ENCODE measurements at regions of chr6 and their contacts with region 1.

Region 1: DNA sequence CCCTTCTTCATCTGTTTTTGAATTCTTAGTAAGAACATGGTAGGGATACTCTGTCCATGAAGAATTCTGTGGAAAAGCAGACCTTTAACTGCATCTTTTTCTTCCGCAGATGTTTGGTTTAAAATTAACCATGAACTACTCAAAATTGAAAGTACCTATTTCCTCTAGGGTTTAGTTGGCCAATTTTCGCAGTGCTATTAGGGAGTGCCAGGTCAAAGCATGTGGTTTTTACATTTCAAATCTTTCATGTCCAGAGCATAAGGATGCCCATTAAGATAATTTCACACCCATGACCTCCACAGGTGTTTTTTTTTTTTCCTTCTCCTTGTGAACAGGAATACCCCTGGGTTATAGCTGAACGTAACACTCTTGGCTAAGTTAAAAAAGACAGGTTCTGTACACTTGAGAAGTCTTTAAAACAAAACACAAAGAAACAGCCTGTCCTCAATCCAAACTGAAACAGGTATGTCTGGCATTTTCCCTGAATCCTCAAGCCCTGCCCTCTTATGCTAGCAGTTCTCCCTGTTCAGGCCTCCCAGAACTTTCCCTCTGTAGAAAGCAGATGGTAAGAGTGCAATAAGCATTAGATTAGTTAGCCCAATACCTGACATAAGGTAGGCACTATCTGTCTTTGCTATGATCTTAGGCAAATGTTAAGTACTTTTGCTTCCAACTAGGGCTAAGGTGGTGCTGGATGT is 67.1 kb downstream of the ELOVL5 start:
- DNase-seq: no peak
- ATAC-seq: no peak
- H3K4me3 ChIP-seq: no peak overlapping the region
- H3K4me3 Mint-ChIP-seq: no peak overlapping the region
- H3K27ac ChIP-seq: no peak overlapping the region
- H3K27ac Mint-ChIP-seq: no peak overlapping the region
- H3K4me1 ChIP-seq: peaks cover 0 to 21% of the 10 kb centered on the region in 2 donors
- H3K4me1 Mint-ChIP-seq: peaks cover 13 to 42% (median 19%) of the 10 kb centered on the region in 7 donors
- H3K27me3 ChIP-seq: no peaks in the 10 kb centered on the region
- H3K27me3 Mint-ChIP-seq: no peaks in the 10 kb centered on the region

Region 2: DNA sequence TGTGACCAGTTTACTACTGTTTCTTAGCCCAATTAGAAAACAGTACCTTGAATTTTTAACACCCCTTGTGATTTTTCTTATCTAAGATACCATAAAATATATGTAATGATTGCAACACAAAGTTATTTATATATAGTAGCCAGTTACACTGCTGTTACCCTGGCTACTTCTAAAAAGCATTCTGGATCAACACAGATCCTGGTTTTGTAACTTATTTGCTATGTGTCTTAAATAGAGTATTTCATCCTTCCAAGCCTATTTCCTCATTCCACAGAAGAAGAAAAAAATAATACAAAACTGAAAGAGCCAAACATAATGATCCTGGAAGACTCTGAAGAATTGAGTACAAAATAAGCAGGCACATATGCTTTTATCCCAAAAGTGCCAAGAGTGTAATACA is 267.6 kb before region 1 on chr6:
- CTCF ChIA-PET with region 1: no interaction called
- POLR2A ChIA-PET with region 1: no interaction called
- intact Hi-C with region 1: no loop called
- DNase-seq: no peak
- ATAC-seq: no peak
- H3K4me3 ChIP-seq: no peak overlapping the region
- H3K4me3 Mint-ChIP-seq: no peak overlapping the region
- H3K27ac ChIP-seq: no peak overlapping the region
- H3K27ac Mint-ChIP-seq: no peak overlapping the region
- H3K4me1 ChIP-seq: no peaks in the 10 kb centered on the region
- H3K4me1 Mint-ChIP-seq: peaks cover 0 to 23% (median 0%) of the 10 kb centered on the region in 7 donors
- H3K27me3 ChIP-seq: no peaks in the 10 kb centered on the region
- H3K27me3 Mint-ChIP-seq: no peaks in the 10 kb centered on the region

Region 3: GRCh38 chr6:53048431-53049195 is 233.1 kb before region 1 on chr6:
- CTCF ChIA-PET with region 1: no interaction called
- POLR2A ChIA-PET with region 1: no interaction called
- intact Hi-C with region 1: no loop called
- DNase-seq: peak in 3 of 9 donors; percentile 18 to 34 (median 31)
- ATAC-seq: peak; percentile 76
- H3K4me3 ChIP-seq: peak overlapping the region; percentile 12
- H3K4me3 Mint-ChIP-seq: peak overlapping the region; percentile 8 to 70 (median 54)
- H3K27ac ChIP-seq: no peak overlapping the region
- H3K27ac Mint-ChIP-seq: peak overlapping the region in 2 of 9 donors; percentile 4 to 32
- H3K4me1 ChIP-seq: peaks cover 11 to 12% of the 10 kb centered on the region in 2 donors
- H3K4me1 Mint-ChIP-seq: peaks cover 23 to 49% (median 34%) of the 10 kb centered on the region in 7 donors
- H3K27me3 ChIP-seq: no peaks in the 10 kb centered on the region
- H3K27me3 Mint-ChIP-seq: no peaks in the 10 kb centered on the region

Region 4: GRCh38 chr6:53263917-53264316 is 17.8 kb before region 1 on chr6:
- CTCF ChIA-PET with region 1: no interaction called
- POLR2A ChIA-PET with region 1: no interaction called
- intact Hi-C with region 1: loop called in 1 of 2 experiments (anchors 2 kb)
- DNase-seq: no peak
- ATAC-seq: no peak
- H3K4me3 ChIP-seq: no peak overlapping the region
- H3K4me3 Mint-ChIP-seq: no peak overlapping the region
- H3K27ac ChIP-seq: no peak overlapping the region
- H3K27ac Mint-ChIP-seq: peak overlapping the region in 1 of 9 donors; percentile 8
- H3K4me1 ChIP-seq: no peaks in the 10 kb centered on the region
- H3K4me1 Mint-ChIP-seq: peaks cover 0 to 9% (median 0%) of the 10 kb centered on the region in 7 donors
- H3K27me3 ChIP-seq: no peaks in the 10 kb centered on the region
- H3K27me3 Mint-ChIP-seq: no peaks in the 10 kb centered on the region

Measured in naive thymus-derived CD4-positive, alpha-beta T cell (primary cell).